ENCODE measurements at regions of chr11 and their contacts with region 1.

Region 1: DNA sequence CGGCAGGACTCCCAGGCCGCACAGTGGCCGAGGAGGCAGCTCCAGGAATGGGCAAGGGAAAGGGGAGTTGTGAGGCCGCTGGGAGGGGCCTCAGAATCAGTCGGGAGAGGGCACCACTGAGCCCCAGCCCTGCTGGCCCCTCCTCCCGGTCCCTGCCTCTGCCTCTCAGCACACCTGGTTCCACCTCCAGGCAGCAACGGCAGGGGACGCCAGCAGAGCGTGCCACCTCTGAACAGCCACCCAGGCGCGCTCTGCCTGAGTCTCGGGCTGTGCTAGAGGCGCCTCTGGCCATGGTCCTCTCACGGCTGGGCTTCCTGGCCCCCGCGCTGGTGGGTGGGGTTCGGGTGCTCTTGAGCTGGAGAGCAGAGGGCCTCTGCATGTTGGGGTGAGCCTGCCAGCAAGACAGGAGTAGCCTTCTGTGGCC is 33.0 kb downstream of the MOB2 start:
- DNase-seq: peak; percentile 44
- H3K4me3 Mint-ChIP-seq: no peak overlapping the region
- H3K27ac Mint-ChIP-seq: no peak overlapping the region
- H3K4me1 Mint-ChIP-seq: no peaks in the 10 kb centered on the region
- H3K27me3 Mint-ChIP-seq: peaks cover 37% of the 10 kb centered on the region
- CTCF ChIP-seq: no peak

Region 2: DNA sequence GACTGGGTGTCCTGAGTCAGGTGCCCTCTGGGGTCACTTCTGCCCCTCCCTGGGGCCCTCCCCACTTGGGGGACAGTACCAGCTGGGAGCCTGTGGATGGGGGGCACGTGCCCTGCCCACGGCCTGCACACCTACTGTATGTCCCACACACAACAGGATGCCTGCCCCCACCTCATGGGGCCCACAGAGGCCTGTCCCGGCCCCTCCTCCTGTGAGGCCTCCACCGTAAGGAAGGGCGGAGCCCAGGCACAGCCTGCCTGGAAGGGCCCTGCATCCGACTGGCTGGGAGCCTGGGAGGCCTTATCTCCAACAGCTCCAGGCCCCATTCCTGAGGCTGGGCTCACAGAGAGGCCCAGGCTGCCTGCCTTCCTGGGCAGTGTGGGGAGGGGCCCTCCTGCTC is 16.1 kb before region 1 on chr11:
- CTCF ChIA-PET with region 1: no interaction called
- intact Hi-C with region 1: no loop called
- DNase-seq: peak; percentile 37
- H3K4me3 Mint-ChIP-seq: no peak overlapping the region
- H3K27ac Mint-ChIP-seq: no peak overlapping the region
- H3K4me1 Mint-ChIP-seq: no peaks in the 10 kb centered on the region
- H3K27me3 Mint-ChIP-seq: peaks cover 15% of the 10 kb centered on the region
- CTCF ChIP-seq: no peak

Region 3: GRCh38 chr11:1515082-1516060 is 61.7 kb after region 1 on chr11:
- CTCF ChIA-PET with region 1: no interaction called
- intact Hi-C with region 1: loop called (anchors 2 kb)
- DNase-seq: peak; percentile 87
- H3K4me3 Mint-ChIP-seq: no peak overlapping the region
- H3K27ac Mint-ChIP-seq: no peak overlapping the region
- H3K4me1 Mint-ChIP-seq: no peaks in the 10 kb centered on the region
- H3K27me3 Mint-ChIP-seq: no peaks in the 10 kb centered on the region
- CTCF ChIP-seq: peak; percentile 90